GM23248 (cell line): ENCODE measurements at regions of chr7 and their contacts with region 1.

Region 1: GRCh38 chr7:47088329-47089067 is 493.4 kb downstream of the TNS3 start:
- DNase-seq: peak; percentile 85
- H3K4me3 ChIP-seq: no peak overlapping the region
- H3K27ac ChIP-seq: peak overlapping the region; percentile 32
- H3K4me1 ChIP-seq: peaks cover 62% of the 10 kb centered on the region
- H3K27me3 ChIP-seq: no peaks in the 10 kb centered on the region

Region 2: GRCh38 chr7:45923290-45923689 is 1165.2 kb before region 1 on chr7:
- in situ Hi-C with region 1: loop called (anchors 5 kb)
- DNase-seq: peak; percentile 90
- H3K4me3 ChIP-seq: peak overlapping the region; percentile 99; the same call in 1 of the 2 replicates
- H3K27ac ChIP-seq: peak overlapping the region; percentile 75
- H3K4me1 ChIP-seq: peaks cover 33% of the 10 kb centered on the region
- H3K27me3 ChIP-seq: no peaks in the 10 kb centered on the region

Region 3: GRCh38 chr7:46352004-46352954 is 736.2 kb before region 1 on chr7:
- in situ Hi-C with region 1: loop called (anchors 10 kb)
- DNase-seq: peak; percentile 74
- H3K4me3 ChIP-seq: no peak overlapping the region
- H3K27ac ChIP-seq: no peak overlapping the region
- H3K4me1 ChIP-seq: peaks cover 28% of the 10 kb centered on the region
- H3K27me3 ChIP-seq: no peaks in the 10 kb centered on the region

Region 4: GRCh38 chr7:46752881-46753366 is 335.6 kb before region 1 on chr7:
- in situ Hi-C with region 1: loop called (anchors 10 kb)
- DNase-seq: peak; percentile 90
- H3K4me3 ChIP-seq: no peak overlapping the region
- H3K27ac ChIP-seq: peak overlapping the region; percentile 80
- H3K4me1 ChIP-seq: peaks cover 51% of the 10 kb centered on the region
- H3K27me3 ChIP-seq: no peaks in the 10 kb centered on the region